ENCODE measurements at regions of chr15 and their contacts with region 1.

Region 1: GRCh38 chr15:25933456-25934158 is 70.5 kb upstream of the ATP10A start:
- DNase-seq: peak; percentile 34 to 85 (median 64)
- ATAC-seq: peak; percentile 97
- H3K4me3 ChIP-seq: peak overlapping the region; percentile 29 to 33
- H3K4me3 Mint-ChIP-seq: peak overlapping the region; percentile 86
- H3K27ac ChIP-seq: no peak overlapping the region
- H3K27ac Mint-ChIP-seq: no peak overlapping the region
- H3K4me1 ChIP-seq: peaks cover 7% of the 10 kb centered on the region
- H3K4me1 Mint-ChIP-seq: peaks cover 8% of the 10 kb centered on the region
- H3K27me3 ChIP-seq: no peaks in the 10 kb centered on the region
- H3K27me3 Mint-ChIP-seq: peaks cover 6% of the 10 kb centered on the region
- CTCF ChIP-seq: peak; percentile 67

Region 2: GRCh38 chr15:25508369-25509002 is 425.1 kb before region 1 on chr15:
- CTCF ChIA-PET with region 1: interaction called, 12 read pairs
- POLR2A ChIA-PET with region 1: no interaction called
- intact Hi-C with region 1: loop called in 1 of 2 experiments (anchors 5 kb)
- DNase-seq: peak in 2 of 9 experiments; percentile 42 to 49
- ATAC-seq: no peak
- H3K4me3 ChIP-seq: no peak overlapping the region
- H3K4me3 Mint-ChIP-seq: no peak overlapping the region
- H3K27ac ChIP-seq: no peak overlapping the region
- H3K27ac Mint-ChIP-seq: no peak overlapping the region
- H3K4me1 ChIP-seq: no peaks in the 10 kb centered on the region
- H3K4me1 Mint-ChIP-seq: no peaks in the 10 kb centered on the region
- H3K27me3 ChIP-seq: no peaks in the 10 kb centered on the region
- H3K27me3 Mint-ChIP-seq: peaks cover 3% of the 10 kb centered on the region
- CTCF ChIP-seq: peak; percentile 45

Region 3: GRCh38 chr15:25739687-25740121 is 193.9 kb before region 1 on chr15:
- CTCF ChIA-PET with region 1: interaction called, 26 read pairs
- POLR2A ChIA-PET with region 1: no interaction called
- intact Hi-C with region 1: loop called in 1 of 2 experiments (anchors 1 kb)
- DNase-seq: peak in 7 of 9 experiments; percentile 16 to 62 (median 44)
- ATAC-seq: peak; percentile 67
- H3K4me3 ChIP-seq: no peak overlapping the region
- H3K4me3 Mint-ChIP-seq: no peak overlapping the region
- H3K27ac ChIP-seq: no peak overlapping the region
- H3K27ac Mint-ChIP-seq: no peak overlapping the region
- H3K4me1 ChIP-seq: peaks cover 4% of the 10 kb centered on the region
- H3K4me1 Mint-ChIP-seq: peaks cover 27% of the 10 kb centered on the region
- H3K27me3 ChIP-seq: no peaks in the 10 kb centered on the region
- H3K27me3 Mint-ChIP-seq: no peaks in the 10 kb centered on the region
- CTCF ChIP-seq: peak; percentile 36

Region 4: DNA sequence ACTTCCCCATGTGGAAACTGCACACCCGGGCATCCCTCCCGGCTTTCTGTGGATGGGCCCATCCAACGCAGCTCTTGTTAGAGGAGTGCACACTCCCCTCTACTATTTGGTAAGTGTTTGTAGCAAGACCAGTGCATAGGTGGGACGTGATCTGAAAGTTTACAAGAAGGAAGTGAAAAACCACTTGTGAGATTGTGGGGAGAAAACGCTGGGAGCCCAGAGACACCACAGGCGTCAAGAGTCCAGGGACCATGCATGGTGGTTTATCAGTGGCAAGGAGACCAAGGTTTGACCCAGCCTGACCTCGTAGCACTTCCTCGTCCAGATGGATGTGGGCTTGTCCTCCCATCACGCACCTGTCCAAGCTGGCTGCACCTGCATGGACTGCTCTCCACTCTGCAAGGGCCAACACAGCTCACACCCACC is 122.1 kb before region 1 on chr15:
- CTCF ChIA-PET with region 1: no interaction called
- POLR2A ChIA-PET with region 1: no interaction called
- intact Hi-C with region 1: loop called in 1 of 2 experiments (anchors 10 kb)
- DNase-seq: peak in 3 of 9 experiments; percentile 30 to 64 (median 44)
- ATAC-seq: peak; percentile 32
- H3K4me3 ChIP-seq: peak overlapping the region; percentile 13 to 27
- H3K4me3 Mint-ChIP-seq: peak overlapping the region; percentile 63
- H3K27ac ChIP-seq: peak overlapping the region in 1 of 2 experiments; percentile 39
- H3K27ac Mint-ChIP-seq: peak overlapping the region; percentile 77
- H3K4me1 ChIP-seq: peaks cover 52% of the 10 kb centered on the region
- H3K4me1 Mint-ChIP-seq: peaks cover 62% of the 10 kb centered on the region
- H3K27me3 ChIP-seq: no peaks in the 10 kb centered on the region
- H3K27me3 Mint-ChIP-seq: no peaks in the 10 kb centered on the region
- CTCF ChIP-seq: no peak

Region 5: DNA sequence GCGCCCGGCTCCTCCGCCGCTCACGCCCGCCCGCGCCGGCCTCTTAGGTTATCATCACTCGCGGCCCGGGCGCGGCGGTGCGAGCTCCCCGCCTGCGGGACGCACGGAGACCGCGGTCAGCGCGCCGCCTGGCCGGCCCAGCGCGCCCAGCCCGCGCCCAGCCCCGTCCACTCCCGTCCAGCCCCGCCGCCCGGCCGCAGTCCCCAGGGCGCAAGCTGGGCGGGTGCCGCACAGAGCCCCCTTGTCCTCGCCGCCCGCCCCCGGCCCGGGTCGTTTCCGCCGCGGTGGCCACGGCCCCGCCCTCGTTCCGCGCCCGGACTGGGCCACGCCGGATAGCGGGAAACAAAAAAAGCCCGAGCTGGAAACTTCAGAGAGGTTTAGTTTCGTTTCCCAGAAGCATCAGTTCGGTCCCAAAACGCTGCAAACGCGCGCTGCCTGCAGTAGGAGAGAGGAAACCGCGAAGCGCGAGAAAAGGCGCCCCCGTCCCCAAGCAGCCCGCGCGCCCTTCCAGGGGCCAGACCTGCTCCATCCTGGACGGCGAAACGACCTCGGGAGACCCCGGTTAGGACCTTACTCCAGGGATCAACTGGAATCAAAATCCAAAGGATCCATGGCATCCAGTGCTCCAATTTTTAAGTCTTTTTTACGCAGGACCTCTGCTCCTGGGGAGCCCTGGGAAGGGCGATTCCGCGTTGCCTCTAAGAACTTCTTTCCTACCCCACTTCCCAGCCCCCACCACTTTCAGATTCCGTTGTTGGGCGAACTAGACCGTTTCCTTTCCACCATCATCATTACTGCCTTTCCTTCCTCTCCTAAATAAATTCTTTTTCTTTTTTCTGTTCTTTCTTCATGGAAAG is 70.3 kb before region 1 on chr15 and contains the start of gene ATP10A:
- CTCF ChIA-PET with region 1: interaction called, 9 read pairs
- POLR2A ChIA-PET with region 1: no interaction called
- intact Hi-C with region 1: loop called in 1 of 2 experiments (anchors 5 kb)
- DNase-seq: peak in 6 of 9 experiments; percentile 44 to 73 (median 55)
- ATAC-seq: no peak
- H3K4me3 ChIP-seq: peak within 1 kb of the TSS; percentile 82 to 90
- H3K4me3 Mint-ChIP-seq: peak within 1 kb of the TSS; percentile 95
- H3K27ac ChIP-seq: peak within 1 kb of the TSS; percentile 67 to 86
- H3K27ac Mint-ChIP-seq: peak within 1 kb of the TSS; percentile 98
- H3K4me1 ChIP-seq: peaks cover 30% of the 10 kb centered on the region
- H3K4me1 Mint-ChIP-seq: peaks cover 36% of the 10 kb centered on the region
- H3K27me3 ChIP-seq: no peaks in the 10 kb centered on the region
- H3K27me3 Mint-ChIP-seq: no peaks in the 10 kb centered on the region
- CTCF ChIP-seq: no peak
- total RNA-seq, gene ATP10A: 17.6 to 18.5 TPM

Region 6: DNA sequence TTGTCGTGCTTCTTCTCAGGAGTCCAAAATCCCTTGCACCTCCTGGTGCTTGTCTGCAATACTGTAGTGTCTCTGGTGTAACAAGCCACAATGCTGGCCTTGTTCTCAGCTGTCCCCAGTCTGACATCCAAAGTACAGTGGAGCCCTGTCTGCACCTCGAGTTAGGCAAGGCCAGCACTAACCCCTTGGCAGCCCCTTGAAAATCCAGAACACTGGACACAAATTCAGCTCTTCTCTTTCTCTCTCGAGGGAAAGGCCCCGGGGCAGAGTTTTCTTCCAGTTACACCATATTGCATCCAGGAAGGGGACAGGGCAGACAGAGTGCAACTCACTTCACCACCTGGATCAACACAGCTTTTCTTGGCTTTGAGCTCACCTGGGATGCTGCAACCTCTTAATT is 20.8 kb after region 1 on chr15:
- CTCF ChIA-PET with region 1: no interaction called
- POLR2A ChIA-PET with region 1: no interaction called
- intact Hi-C with region 1: no loop called
- DNase-seq: peak in 1 of 9 experiments; percentile 36
- ATAC-seq: no peak
- H3K4me3 ChIP-seq: no peak overlapping the region
- H3K4me3 Mint-ChIP-seq: no peak overlapping the region
- H3K27ac ChIP-seq: no peak overlapping the region
- H3K27ac Mint-ChIP-seq: no peak overlapping the region
- H3K4me1 ChIP-seq: no peaks in the 10 kb centered on the region
- H3K4me1 Mint-ChIP-seq: no peaks in the 10 kb centered on the region
- H3K27me3 ChIP-seq: peaks cover 0 to 7% of the 10 kb centered on the region in 2 experiments
- H3K27me3 Mint-ChIP-seq: peaks cover 11% of the 10 kb centered on the region
- CTCF ChIP-seq: no peak

Region 7: GRCh38 chr15:26197719-26198118 is 264.1 kb after region 1 on chr15:
- CTCF ChIA-PET with region 1: no interaction called
- POLR2A ChIA-PET with region 1: no interaction called
- intact Hi-C with region 1: no loop called
- DNase-seq: no peak
- ATAC-seq: no peak
- H3K4me3 ChIP-seq: no peak overlapping the region
- H3K4me3 Mint-ChIP-seq: no peak overlapping the region
- H3K27ac ChIP-seq: no peak overlapping the region
- H3K27ac Mint-ChIP-seq: no peak overlapping the region
- H3K4me1 ChIP-seq: no peaks in the 10 kb centered on the region
- H3K4me1 Mint-ChIP-seq: no peaks in the 10 kb centered on the region
- H3K27me3 ChIP-seq: no peaks in the 10 kb centered on the region
- H3K27me3 Mint-ChIP-seq: peaks cover 3% of the 10 kb centered on the region
- CTCF ChIP-seq: no peak